Dorsolateral prefrontal cortex (tissue), 120 donors: ENCODE measurements at regions of chr9 and their contacts with region 1.

Region 1: DNA sequence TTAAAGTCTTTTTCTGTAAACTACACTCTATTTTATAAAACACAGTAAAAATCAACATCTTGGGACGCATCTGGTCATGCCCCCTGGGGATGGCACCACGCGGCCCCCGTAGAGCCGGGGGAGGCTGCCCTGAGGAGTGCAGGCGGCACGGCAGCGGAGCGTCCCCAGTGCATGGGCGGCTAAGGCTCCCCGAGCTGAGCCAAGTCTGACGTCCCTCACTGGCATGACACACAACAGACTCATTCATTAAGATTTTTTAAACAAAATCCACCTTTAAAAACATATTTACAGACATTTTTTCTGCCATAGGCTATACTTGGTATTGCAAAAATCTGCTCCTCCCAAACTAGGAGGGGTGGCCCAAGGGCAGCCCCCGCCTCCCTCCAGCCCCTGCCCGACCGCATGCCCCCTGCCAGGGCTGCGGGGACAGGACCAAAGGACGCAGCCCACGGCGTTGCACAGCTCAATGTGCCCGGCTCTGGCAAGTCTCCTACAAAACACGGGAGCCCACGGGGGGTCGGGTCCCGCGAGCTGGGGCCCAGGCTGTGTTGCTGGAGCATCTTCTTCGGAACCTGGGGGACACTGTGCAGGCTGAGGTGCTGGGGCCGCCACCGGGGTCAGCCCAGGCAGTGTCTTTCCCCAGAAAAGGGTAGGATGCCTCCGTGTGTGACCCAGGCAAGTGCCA is 11.8 kb upstream of the SEC16A start:
- DNase-seq: peak in 7 of 10 donors; percentile 56 to 82 (median 70)
- H3K4me3 ChIP-seq: peak overlapping the region in 25 of 59 donors; percentile 2 to 42 (median 20)
- H3K27ac ChIP-seq: peak overlapping the region in 54 of 59 donors; percentile 3 to 91 (median 77)
- H3K27me3 ChIP-seq: no peaks in the 10 kb centered on the region
- CTCF ChIP-seq: peak in 8 of 56 donors; percentile 11 to 31 (median 21)

Region 2: DNA sequence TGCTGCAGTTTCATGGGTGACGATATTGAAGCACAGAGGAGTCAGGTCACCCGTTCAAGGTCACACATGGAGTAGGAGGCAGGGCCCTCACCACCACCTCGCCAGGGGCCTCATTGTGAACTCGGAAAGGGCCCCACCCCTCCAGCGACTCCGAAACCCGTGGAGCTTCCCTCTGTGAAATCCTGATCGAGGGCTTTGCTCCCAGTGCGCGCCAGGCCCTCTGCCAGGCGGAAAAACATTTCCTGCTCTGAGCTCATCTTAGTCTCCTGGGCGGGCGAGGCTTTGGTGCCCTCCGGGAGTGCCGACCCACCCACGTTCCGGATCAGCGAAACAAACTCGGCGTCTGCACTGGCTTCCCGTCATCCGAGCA is 1501.9 kb before region 1 on chr9:
- intact Hi-C with region 1: no loop called
- DNase-seq: peak in 6 of 10 donors; percentile 20 to 49 (median 40)
- H3K4me3 ChIP-seq: no peak overlapping the region
- H3K27ac ChIP-seq: no peak overlapping the region
- H3K27me3 ChIP-seq: no peaks in the 10 kb centered on the region
- CTCF ChIP-seq: no peak

Region 3: GRCh38 chr9:136512651-136513071 is 18.0 kb after region 1 on chr9:
- intact Hi-C with region 1: no loop called
- DNase-seq: no peak
- H3K4me3 ChIP-seq: peak overlapping the region in 14 of 59 donors; percentile 1 to 44 (median 23)
- H3K27ac ChIP-seq: peak overlapping the region; percentile 61 to 98 (median 92)
- H3K27me3 ChIP-seq: no peaks in the 10 kb centered on the region
- CTCF ChIP-seq: no peak

Region 4: GRCh38 chr9:136525841-136526499 is 31.3 kb after region 1 on chr9:
- intact Hi-C with region 1: loop called in 1 of 2 experiments (anchors 1 kb)
- DNase-seq: peak; percentile 42 to 95 (median 92)
- H3K4me3 ChIP-seq: peak overlapping the region in 44 of 59 donors; percentile 0 to 55 (median 26)
- H3K27ac ChIP-seq: peak overlapping the region; percentile 76 to 98 (median 93)
- H3K27me3 ChIP-seq: peaks cover 0 to 7% (median 0%) of the 10 kb centered on the region in 45 donors
- CTCF ChIP-seq: peak in 51 of 56 donors; percentile 13 to 71 (median 43)

Region 5: DNA sequence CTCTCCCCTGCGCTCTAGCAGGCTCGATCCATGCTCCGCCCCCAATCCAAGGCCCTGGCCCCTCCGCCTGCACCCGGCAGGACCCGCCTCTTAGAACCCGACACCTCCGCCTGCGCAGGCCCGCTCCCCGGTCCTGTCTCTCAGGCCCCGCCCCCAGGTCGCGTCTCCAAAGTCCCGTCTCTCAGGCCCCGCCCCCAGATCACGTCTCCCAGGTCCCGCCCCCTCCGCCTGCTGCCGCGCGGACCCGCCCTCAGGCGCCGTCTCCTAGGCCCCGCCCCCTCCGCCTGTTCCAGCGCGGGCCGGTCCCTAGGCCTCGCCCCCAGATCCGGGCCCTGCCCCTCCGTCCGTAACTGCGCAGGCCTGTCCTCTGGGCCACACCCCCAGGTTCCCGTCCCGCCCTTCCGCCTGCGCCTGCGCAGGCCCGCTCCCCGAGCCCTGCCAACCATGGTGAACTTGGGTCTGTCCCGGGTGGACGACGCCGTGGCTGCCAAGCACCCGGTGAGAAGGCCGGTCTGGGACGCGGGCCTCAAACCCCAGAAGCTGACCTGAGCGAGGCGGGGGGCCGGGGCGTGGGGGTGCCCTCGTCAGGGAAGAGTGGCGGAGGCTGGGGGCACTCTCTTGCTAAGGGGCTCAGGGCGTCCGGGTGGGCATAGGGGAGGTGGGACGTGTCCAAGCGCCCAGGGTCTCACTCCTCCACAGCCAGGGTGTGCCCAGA is 296.4 kb after region 1 on chr9 and contains the start of gene TMEM141:
- intact Hi-C with region 1: no loop called
- DNase-seq: peak; percentile 99 to 100 (median 100)
- H3K4me3 ChIP-seq: peak within 1 kb of the TSS; percentile 54 to 95 (median 85)
- H3K27ac ChIP-seq: peak within 1 kb of the TSS; percentile 74 to 99 (median 95)
- H3K27me3 ChIP-seq: no peaks in the 10 kb centered on the region
- CTCF ChIP-seq: peak in 3 of 56 donors; percentile 8 to 23 (median 18)
- total RNA-seq, gene TMEM141: 37.4 to 81.9 (median 55.2) TPM